ENCODE measurements at regions of chr9 and their contacts with region 1.

Region 1: DNA sequence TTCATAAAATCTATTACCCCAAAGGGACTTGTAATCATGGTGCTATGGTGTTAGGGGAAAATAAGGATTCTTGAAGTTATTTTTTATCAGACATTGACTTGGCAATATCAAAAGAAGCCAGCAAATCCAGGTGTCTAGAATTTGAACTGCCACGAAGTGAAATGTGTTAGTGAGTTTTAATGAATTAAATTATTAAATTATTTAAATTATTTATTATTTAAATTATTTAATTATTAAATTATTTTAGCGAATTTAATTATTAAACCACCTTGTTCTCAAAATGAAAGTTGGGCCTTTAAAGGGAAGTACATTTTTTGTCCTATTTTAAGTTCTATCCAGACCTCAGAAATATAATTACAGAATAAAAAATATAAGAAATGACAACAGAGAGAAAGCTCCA is 332.6 kb upstream of the SMC2 start:
- DNase-seq: no peak
- H3K4me3 ChIP-seq: no peak overlapping the region
- H3K27ac ChIP-seq: no peak overlapping the region
- H3K4me1 ChIP-seq: no peaks in the 10 kb centered on the region
- H3K27me3 ChIP-seq: no peaks in the 10 kb centered on the region
- CTCF ChIP-seq: no peak
- EP300 ChIP-seq: no peak
- POLR2A ChIP-seq: no peak

Region 2: GRCh38 chr9:104367515-104367914 is 606.0 kb after region 1 on chr9:
- in situ Hi-C with region 1: no loop called
- intact Hi-C with region 1: no loop called
- DNase-seq: no peak
- H3K4me3 ChIP-seq: no peak overlapping the region
- H3K27ac ChIP-seq: no peak overlapping the region
- H3K4me1 ChIP-seq: no peaks in the 10 kb centered on the region
- H3K27me3 ChIP-seq: no peaks in the 10 kb centered on the region
- CTCF ChIP-seq: no peak
- EP300 ChIP-seq: no peak
- POLR2A ChIP-seq: no peak

Region 3: GRCh38 chr9:104589626-104590025 is 828.2 kb after region 1 on chr9:
- in situ Hi-C with region 1: no loop called
- intact Hi-C with region 1: loop called (anchors 5 kb)
- DNase-seq: no peak
- H3K4me3 ChIP-seq: no peak overlapping the region
- H3K27ac ChIP-seq: no peak overlapping the region
- H3K4me1 ChIP-seq: no peaks in the 10 kb centered on the region
- H3K27me3 ChIP-seq: no peaks in the 10 kb centered on the region
- CTCF ChIP-seq: no peak
- EP300 ChIP-seq: no peak
- POLR2A ChIP-seq: no peak

Measured in transverse colon (tissue), 4 donors.